ENCODE measurements at regions of chr9 and their contacts with region 1.

Region 1: DNA sequence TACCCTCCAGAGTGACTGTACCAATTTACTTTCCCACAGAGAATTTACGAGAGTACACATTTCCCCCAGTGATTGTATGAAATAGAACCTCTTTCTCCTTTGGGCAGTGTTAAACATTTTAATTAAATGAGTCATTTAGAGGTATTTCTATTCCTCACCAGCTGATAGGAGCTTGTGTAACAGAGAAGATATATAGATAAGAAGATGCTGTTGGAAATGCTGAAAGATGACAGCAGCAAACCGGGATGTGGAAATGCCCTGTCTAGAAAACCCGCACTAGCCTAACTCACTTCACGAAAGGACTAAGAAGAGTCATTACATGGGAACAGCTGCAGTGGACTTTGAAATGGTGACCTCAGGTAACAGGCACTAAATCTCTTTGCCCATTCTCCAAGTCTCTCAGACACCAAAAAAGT is 68.3 kb downstream of the LPAR1 start:
- DNase-seq: peak; percentile 87
- H3K4me3 ChIP-seq: no peak overlapping the region
- H3K4me3 Mint-ChIP-seq: peak overlapping the region; percentile 48
- H3K27ac Mint-ChIP-seq: peak overlapping the region; percentile 73
- H3K4me1 ChIP-seq: peaks cover 47% of the 10 kb centered on the region
- H3K4me1 Mint-ChIP-seq: peaks cover 39% of the 10 kb centered on the region
- H3K27me3 ChIP-seq: no peaks in the 10 kb centered on the region
- H3K27me3 Mint-ChIP-seq: no peaks in the 10 kb centered on the region
- CTCF ChIP-seq: no peak

Region 2: DNA sequence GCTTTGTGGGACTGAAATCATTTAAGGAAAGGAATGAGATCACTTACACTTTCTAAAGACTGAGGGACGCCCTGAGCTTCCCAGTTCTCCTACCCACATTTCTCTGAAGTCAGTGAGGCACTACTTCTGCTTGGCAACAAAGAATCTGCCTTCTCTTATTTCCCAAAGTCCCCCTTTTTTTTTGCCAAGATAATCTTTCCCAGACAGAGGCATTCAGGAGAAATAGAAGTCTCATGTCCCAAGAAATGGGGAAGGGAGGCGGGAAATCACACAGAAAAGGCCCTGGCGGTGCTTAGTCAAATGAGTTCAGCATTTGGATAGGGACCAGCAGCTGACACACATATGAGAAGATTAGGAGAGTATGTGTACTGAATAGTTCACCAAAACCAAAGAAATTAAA is 141.7 kb before region 1 on chr9:
- CTCF ChIA-PET with region 1: no interaction called
- POLR2A ChIA-PET with region 1: no interaction called
- intact Hi-C with region 1: loop called (anchors 1 kb)
- DNase-seq: no peak
- H3K4me3 ChIP-seq: no peak overlapping the region
- H3K4me3 Mint-ChIP-seq: no peak overlapping the region
- H3K27ac Mint-ChIP-seq: peak overlapping the region; percentile 53
- H3K4me1 ChIP-seq: peaks cover 30% of the 10 kb centered on the region
- H3K4me1 Mint-ChIP-seq: peaks cover 37% of the 10 kb centered on the region
- H3K27me3 ChIP-seq: no peaks in the 10 kb centered on the region
- H3K27me3 Mint-ChIP-seq: no peaks in the 10 kb centered on the region
- CTCF ChIP-seq: no peak

Region 3: GRCh38 chr9:110911659-110912418 is 58.1 kb before region 1 on chr9:
- CTCF ChIA-PET with region 1: no interaction called
- POLR2A ChIA-PET with region 1: no interaction called
- intact Hi-C with region 1: loop called (anchors 1 kb)
- DNase-seq: peak in 1 of 2 experiments; percentile 35
- H3K4me3 ChIP-seq: no peak overlapping the region
- H3K4me3 Mint-ChIP-seq: peak overlapping the region; percentile 59
- H3K27ac Mint-ChIP-seq: peak overlapping the region; percentile 68
- H3K4me1 ChIP-seq: peaks cover 32% of the 10 kb centered on the region
- H3K4me1 Mint-ChIP-seq: peaks cover 34% of the 10 kb centered on the region
- H3K27me3 ChIP-seq: no peaks in the 10 kb centered on the region
- H3K27me3 Mint-ChIP-seq: no peaks in the 10 kb centered on the region
- CTCF ChIP-seq: no peak

Region 4: DNA sequence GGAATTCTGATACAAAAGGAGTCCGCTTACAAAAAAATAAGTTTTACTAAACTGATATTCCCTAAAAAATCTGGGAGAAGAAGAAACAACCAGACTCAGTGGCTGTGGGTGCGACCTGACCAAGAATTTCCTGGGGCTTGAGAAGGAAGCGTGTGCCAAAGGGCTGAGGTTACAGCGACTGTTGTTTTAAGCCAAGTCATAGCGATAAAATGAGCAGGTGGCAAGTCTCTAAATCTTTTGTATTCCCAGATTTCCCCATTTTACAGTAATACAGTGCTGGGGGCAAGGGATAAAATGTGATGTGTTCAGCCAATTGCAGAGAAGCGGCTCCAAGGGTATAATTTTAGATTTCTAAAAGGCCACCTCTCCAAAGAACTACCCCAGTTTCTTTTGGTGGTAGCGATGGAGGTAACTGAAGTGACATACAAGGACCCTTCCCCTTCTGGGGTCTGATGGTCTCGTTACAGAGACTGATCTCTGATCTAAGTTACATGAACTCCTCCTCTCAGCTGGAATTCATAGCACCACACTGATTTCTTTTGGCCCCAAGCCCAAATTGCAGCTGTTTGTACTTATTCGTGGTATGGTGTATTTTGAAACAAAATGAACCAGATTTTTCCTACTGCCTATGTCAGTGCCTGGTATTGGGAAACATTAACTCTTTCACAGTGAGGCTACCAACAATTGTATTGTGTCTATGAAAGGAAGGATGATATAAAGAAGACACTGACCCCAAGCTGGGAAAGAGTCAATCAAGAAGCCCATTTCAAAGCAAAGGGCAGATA is 26.6 kb after region 1 on chr9:
- CTCF ChIA-PET with region 1: no interaction called
- POLR2A ChIA-PET with region 1: no interaction called
- intact Hi-C with region 1: loop called (anchors 1 kb)
- DNase-seq: no peak
- H3K4me3 ChIP-seq: no peak overlapping the region
- H3K4me3 Mint-ChIP-seq: no peak overlapping the region
- H3K27ac Mint-ChIP-seq: no peak overlapping the region
- H3K4me1 ChIP-seq: peaks cover 6% of the 10 kb centered on the region
- H3K4me1 Mint-ChIP-seq: peaks cover 7% of the 10 kb centered on the region
- H3K27me3 ChIP-seq: no peaks in the 10 kb centered on the region
- H3K27me3 Mint-ChIP-seq: no peaks in the 10 kb centered on the region
- CTCF ChIP-seq: no peak

Region 5: GRCh38 chr9:111013250-111013649 is 43.3 kb after region 1 on chr9:
- CTCF ChIA-PET with region 1: no interaction called
- POLR2A ChIA-PET with region 1: no interaction called
- intact Hi-C with region 1: loop called (anchors 1 kb)
- DNase-seq: peak in 1 of 2 experiments; percentile 9
- H3K4me3 ChIP-seq: no peak overlapping the region
- H3K4me3 Mint-ChIP-seq: no peak overlapping the region
- H3K27ac Mint-ChIP-seq: peak overlapping the region; percentile 46
- H3K4me1 ChIP-seq: peaks cover 24% of the 10 kb centered on the region
- H3K4me1 Mint-ChIP-seq: peaks cover 6% of the 10 kb centered on the region
- H3K27me3 ChIP-seq: no peaks in the 10 kb centered on the region
- H3K27me3 Mint-ChIP-seq: no peaks in the 10 kb centered on the region
- CTCF ChIP-seq: no peak

Region 6: DNA sequence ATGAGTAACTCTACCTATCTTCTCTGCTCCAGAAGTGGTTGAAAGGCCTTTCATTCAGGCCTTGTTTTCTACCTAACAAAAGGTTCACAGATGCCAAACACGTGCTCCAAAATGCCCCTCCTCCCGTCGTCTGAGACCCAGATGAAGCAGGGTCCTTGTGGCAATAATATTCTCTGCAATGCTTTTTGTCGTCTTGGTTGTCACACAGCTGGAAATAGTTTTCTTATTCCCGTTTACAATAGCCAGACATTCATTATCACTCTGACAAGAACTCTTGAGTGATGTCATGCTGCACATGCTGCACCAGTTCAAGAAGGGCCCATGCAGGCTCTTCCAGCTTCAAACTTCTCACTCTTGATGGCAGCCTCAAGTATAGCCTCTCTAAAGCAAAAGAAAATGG is 60.5 kb after region 1 on chr9:
- CTCF ChIA-PET with region 1: no interaction called
- POLR2A ChIA-PET with region 1: no interaction called
- intact Hi-C with region 1: no loop called
- DNase-seq: no peak
- H3K4me3 ChIP-seq: no peak overlapping the region
- H3K4me3 Mint-ChIP-seq: no peak overlapping the region
- H3K27ac Mint-ChIP-seq: no peak overlapping the region
- H3K4me1 ChIP-seq: peaks cover 2% of the 10 kb centered on the region; the same call in 1 of the 2 replicates
- H3K4me1 Mint-ChIP-seq: peaks cover 15% of the 10 kb centered on the region
- H3K27me3 ChIP-seq: no peaks in the 10 kb centered on the region
- H3K27me3 Mint-ChIP-seq: no peaks in the 10 kb centered on the region
- CTCF ChIP-seq: no peak